Dorsolateral prefrontal cortex (tissue), 120 donors: ENCODE measurements at regions of chr4 and their contacts with region 1.

Region 1: DNA sequence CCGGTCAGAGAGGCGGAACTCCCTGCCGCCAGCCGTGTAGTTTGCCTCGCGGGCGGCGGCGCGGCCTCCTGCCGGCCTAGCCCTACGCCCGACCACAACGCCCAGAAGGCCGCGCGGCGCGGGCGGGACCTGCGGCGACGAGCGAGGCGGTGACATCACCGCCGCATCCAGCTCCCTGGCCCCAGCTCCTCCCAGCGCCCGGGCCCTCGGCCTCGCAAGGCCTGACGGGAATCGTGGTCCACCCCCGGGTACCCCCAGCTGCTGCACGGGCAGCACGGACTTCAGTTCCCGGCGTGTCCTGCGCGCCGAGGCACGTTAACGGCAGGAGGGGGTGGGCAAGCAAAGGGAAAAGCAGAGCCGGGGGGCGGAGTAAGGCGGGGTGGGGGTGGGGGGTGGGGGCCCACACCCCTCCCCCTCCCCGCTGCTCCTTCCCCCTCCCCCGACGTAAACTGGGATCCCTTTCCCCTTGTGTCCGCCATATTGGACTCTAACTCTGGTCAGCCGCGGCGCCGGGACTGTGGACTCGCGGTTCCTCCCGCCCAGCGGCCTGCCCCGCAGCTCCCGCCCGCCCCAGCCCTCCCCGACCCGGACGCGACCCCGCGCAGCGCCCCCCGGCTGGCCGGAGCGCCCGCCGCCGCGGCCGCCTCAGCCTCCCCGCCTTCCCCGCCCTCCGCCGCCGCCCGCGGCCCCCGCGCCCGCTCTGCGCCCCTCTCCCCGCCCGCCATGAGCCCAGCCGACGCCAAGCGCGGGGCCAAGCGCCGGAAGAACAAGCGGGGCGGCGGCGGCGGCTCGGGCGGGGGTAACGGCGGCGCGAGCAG is at the start of gene FAM193A:
- DNase-seq: peak; percentile 98 to 100 (median 99)
- H3K4me3 ChIP-seq: peak within 1 kb of the TSS; percentile 74 to 97 (median 91)
- H3K27ac ChIP-seq: peak within 1 kb of the TSS; percentile 37 to 99 (median 94)
- H3K27me3 ChIP-seq: no peaks in the 10 kb centered on the region
- CTCF ChIP-seq: peak in 28 of 56 donors; percentile 5 to 47 (median 28)
- total RNA-seq, gene FAM193A: 30.7 to 56.7 (median 40.1) TPM

Region 2: GRCh38 chr4:2241410-2242353 is 294.7 kb before region 1 on chr4 and contains the starts of genes HAUS3 and POLN:
- intact Hi-C with region 1: loop called (anchors 5 to 10 kb)
- DNase-seq: peak; percentile 93 to 99 (median 96)
- H3K4me3 ChIP-seq: peak within 1 kb of the TSS; percentile 64 to 100 (median 96)
- H3K27ac ChIP-seq: peak within 1 kb of the TSS in 53 of 59 donors; percentile 2 to 89 (median 71)
- H3K27me3 ChIP-seq: no peaks in the 10 kb centered on the region
- CTCF ChIP-seq: peak in 22 of 56 donors; percentile 11 to 57 (median 40)
- total RNA-seq, gene HAUS3: 13.0 to 29.2 (median 19.3) TPM
- total RNA-seq, gene POLN: 9.4 to 50.0 (median 23.7) TPM

Region 3: DNA sequence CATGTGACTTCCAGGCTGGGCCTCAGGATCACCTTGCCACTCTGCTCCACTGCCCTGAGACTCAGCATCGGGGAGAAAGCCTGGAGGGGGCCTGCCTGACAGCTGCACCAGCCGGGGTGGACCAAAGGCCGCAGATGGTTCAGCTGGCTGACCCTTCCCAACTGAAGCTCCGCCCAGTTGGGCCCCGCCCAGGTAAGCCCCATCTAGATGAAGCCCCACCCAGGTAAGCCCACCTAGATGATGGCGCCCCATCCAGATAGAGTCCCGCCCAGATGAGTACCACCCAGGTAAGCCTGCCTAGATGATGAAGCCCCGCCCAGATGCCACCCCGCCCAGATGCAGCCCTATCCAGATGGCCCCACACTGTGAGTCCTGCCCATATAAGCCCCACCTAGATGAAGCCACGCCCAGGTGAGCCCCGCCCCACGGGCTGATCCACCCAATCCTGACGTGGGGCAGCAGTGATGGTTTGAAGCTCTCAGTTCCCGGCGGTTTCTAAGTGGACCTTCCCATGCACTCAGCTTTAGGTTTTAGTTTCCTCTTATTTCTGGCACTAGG is 127.9 kb before region 1 on chr4:
- intact Hi-C with region 1: no loop called
- DNase-seq: peak in 1 of 10 donors; percentile 43
- H3K4me3 ChIP-seq: no peak overlapping the region
- H3K27ac ChIP-seq: peak overlapping the region in 23 of 59 donors; percentile 13 to 81 (median 52)
- H3K27me3 ChIP-seq: no peaks in the 10 kb centered on the region
- CTCF ChIP-seq: no peak

Region 4: GRCh38 chr4:2468445-2469192 is 67.8 kb before region 1 on chr4 and contains the start of gene RNF4:
- intact Hi-C with region 1: loop called (anchors 2 kb)
- DNase-seq: peak; percentile 86 to 97 (median 96)
- H3K4me3 ChIP-seq: peak within 1 kb of the TSS; percentile 71 to 100 (median 96)
- H3K27ac ChIP-seq: peak within 1 kb of the TSS; percentile 62 to 99 (median 93)
- H3K27me3 ChIP-seq: no peaks in the 10 kb centered on the region
- CTCF ChIP-seq: peak in 23 of 56 donors; percentile 2 to 56 (median 23)
- total RNA-seq, gene RNF4: 40.7 to 76.3 (median 56.4) TPM

Region 5: GRCh38 chr4:2755837-2756694 is 219.7 kb after region 1 on chr4 and contains the start of gene TNIP2:
- intact Hi-C with region 1: loop called in 1 of 2 experiments (anchors 10 kb)
- DNase-seq: peak; percentile 33 to 80 (median 52)
- H3K4me3 ChIP-seq: peak within 1 kb of the TSS; percentile 62 to 94 (median 81)
- H3K27ac ChIP-seq: peak within 1 kb of the TSS in 55 of 59 donors; percentile 39 to 87 (median 75)
- H3K27me3 ChIP-seq: no peaks in the 10 kb centered on the region
- CTCF ChIP-seq: peak in 43 of 56 donors; percentile 6 to 58 (median 34)
- total RNA-seq, gene TNIP2: 4.8 to 32.4 (median 12.7) TPM